ENCODE measurements at regions of chr9 and their contacts with region 1.

Region 1: DNA sequence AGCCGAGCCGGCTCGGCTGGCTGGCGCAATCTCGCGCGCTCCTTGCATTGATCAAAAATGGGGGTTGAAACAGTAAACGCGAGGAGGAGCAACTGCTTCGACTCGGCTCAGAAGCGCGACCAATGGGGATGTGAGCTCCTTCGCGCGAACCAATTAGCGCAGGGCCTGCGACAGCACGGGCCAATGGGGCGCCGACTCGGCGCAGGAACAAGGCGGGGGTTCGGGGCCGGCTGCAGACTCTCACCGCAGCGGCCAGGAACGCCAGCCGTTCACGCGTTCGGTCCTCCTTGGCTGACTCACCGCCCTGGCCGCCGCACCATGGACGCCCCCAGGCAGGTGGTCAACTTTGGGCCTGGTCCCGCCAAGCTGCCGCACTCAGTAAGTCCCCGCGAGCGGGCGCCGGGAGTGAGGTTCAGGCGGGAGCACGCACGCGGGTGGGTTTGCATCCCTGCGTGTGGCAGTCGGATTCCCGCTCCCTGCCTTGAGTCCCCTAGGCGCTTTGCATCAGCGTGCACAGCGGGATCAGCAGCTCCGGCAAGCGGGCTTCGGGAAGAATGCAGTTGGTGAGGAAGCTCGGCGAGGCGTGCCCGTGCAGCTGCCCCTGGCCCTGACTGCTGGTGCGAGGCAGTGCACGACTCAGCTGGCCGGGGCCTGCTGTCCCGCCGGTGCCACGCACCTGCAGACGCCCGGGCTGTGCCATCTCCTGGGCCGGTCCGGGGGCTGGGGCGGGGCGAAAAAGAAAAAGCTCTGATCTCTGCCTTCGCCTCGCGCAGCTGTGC is at the start of gene PSAT1:
- DNase-seq: peak; percentile 90 to 91
- H3K4me3 ChIP-seq: peak within 1 kb of the TSS; percentile 87 to 93 (median 90)
- H3K27ac ChIP-seq: peak within 1 kb of the TSS; percentile 94
- H3K4me1 ChIP-seq: peaks cover 8 to 16% (median 12%) of the 10 kb centered on the region in 4 experiments; a peak in 6 of 7 replicates
- H3K27me3 ChIP-seq: no peaks in the 10 kb centered on the region
- CTCF ChIP-seq: no peak
- EP300 ChIP-seq: no peak
- POLR2A ChIP-seq: peak; percentile 95 to 98
- RAD21 ChIP-seq: no peak
- total RNA-seq, gene PSAT1: 317 and 341 TPM in 2 replicates

Region 2: GRCh38 chr9:78235756-78236538 is 61.1 kb before region 1 on chr9 and contains the start of gene CEP78:
- CTCF ChIA-PET with region 1: no interaction called
- POLR2A ChIA-PET with region 1: interaction called, 73 read pairs
- DNase-seq: peak; percentile 85 to 92
- H3K4me3 ChIP-seq: peak within 1 kb of the TSS; percentile 79 to 90 (median 90)
- H3K27ac ChIP-seq: peak within 1 kb of the TSS; percentile 80
- H3K4me1 ChIP-seq: peaks cover 0 to 2% (median under 1%) of the 10 kb centered on the region in 4 experiments; a peak in 2 of 7 replicates
- H3K27me3 ChIP-seq: no peaks in the 10 kb centered on the region
- CTCF ChIP-seq: no peak
- EP300 ChIP-seq: no peak
- POLR2A ChIP-seq: peak; percentile 80 to 89
- RAD21 ChIP-seq: no peak
- total RNA-seq, gene CEP78: 38.7 and 40.9 TPM in 2 replicates

Region 3: GRCh38 chr9:78261403-78262001 is 35.6 kb before region 1 on chr9:
- CTCF ChIA-PET with region 1: interaction called, 6 read pairs
- POLR2A ChIA-PET with region 1: interaction called, 48 read pairs
- DNase-seq: no peak
- H3K4me3 ChIP-seq: no peak overlapping the region
- H3K27ac ChIP-seq: no peak overlapping the region
- H3K4me1 ChIP-seq: no peaks in the 10 kb centered on the region
- H3K27me3 ChIP-seq: no peaks in the 10 kb centered on the region
- CTCF ChIP-seq: peak in 2 of 3 experiments; percentile 5 to 47; a peak in 2 of 4 replicates
- EP300 ChIP-seq: no peak
- POLR2A ChIP-seq: no peak
- RAD21 ChIP-seq: peak in 1 of 2 experiments; percentile 43; a peak in 3 of 4 replicates

Region 4: DNA sequence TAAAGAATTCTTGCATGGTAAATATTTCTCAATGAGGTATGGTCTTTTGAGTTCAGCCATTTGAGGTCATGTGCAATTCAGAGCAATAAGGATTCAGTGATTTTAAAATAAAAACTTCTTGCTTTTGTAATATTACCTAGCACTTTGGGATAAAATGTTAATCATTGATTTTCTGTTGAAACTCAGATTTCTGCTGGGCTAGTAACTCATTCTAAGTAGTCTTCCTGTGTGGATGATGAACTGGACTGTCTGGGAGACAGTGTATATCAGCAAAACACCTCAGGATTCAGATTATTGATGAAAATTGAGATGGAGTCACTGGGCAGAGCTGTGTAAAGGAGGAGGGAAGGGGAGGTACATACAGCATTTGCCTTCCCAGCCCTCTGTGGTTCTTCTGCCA is 11.0 kb before region 1 on chr9:
- CTCF ChIA-PET with region 1: interaction called, 21 read pairs
- POLR2A ChIA-PET with region 1: interaction called, 936 read pairs
- DNase-seq: no peak
- H3K4me3 ChIP-seq: no peak overlapping the region
- H3K27ac ChIP-seq: no peak overlapping the region
- H3K4me1 ChIP-seq: no peaks in the 10 kb centered on the region
- H3K27me3 ChIP-seq: no peaks in the 10 kb centered on the region
- CTCF ChIP-seq: no peak
- EP300 ChIP-seq: no peak
- POLR2A ChIP-seq: no peak
- RAD21 ChIP-seq: no peak

Region 5: GRCh38 chr9:78325343-78325742 is 28.3 kb after region 1 on chr9:
- CTCF ChIA-PET with region 1: interaction called, 3 read pairs
- POLR2A ChIA-PET with region 1: interaction called, 520 read pairs
- DNase-seq: no peak
- H3K4me3 ChIP-seq: no peak overlapping the region
- H3K27ac ChIP-seq: no peak overlapping the region
- H3K4me1 ChIP-seq: peaks cover 0 to 2% (median 0%) of the 10 kb centered on the region in 4 experiments; a peak in 2 of 7 replicates
- H3K27me3 ChIP-seq: no peaks in the 10 kb centered on the region
- CTCF ChIP-seq: no peak
- EP300 ChIP-seq: no peak
- POLR2A ChIP-seq: peak in 1 of 2 experiments; percentile 47; a peak in 2 of 3 replicates
- RAD21 ChIP-seq: no peak